Panc1 (cell line): ENCODE measurements at regions of chr7 and their contacts with region 1.

Region 1: GRCh38 chr7:94348142-94348541 is 46.6 kb upstream of the COL1A2 start:
- DNase-seq: no peak
- ATAC-seq: no peak
- H3K4me3 ChIP-seq: no peak overlapping the region
- H3K27ac ChIP-seq: no peak overlapping the region
- H3K4me1 ChIP-seq: no peaks in the 10 kb centered on the region
- H3K27me3 ChIP-seq: no peaks in the 10 kb centered on the region; the same call in 1 of the 2 replicates
- CTCF ChIP-seq: no peak

Region 2: DNA sequence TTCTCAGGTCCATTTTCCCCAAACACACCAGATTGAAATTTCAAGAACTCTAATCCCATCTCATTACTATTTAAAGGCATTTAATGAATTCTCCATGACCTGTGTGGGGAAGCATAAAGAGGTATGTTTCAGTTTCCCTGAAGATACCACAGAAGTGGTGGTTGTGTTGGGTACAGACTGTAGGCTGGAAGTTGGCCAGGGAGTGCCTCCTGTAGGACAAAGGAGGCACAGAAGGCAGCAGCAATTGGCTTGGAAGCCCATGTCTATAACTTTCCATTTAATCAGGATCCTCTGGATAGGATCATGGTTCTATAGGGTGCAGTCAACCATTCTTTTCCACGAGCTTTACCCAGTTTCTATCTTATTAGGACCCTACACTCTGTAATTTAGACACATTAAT is 335.4 kb before region 1 on chr7:
- CTCF ChIA-PET with region 1: no interaction called
- POLR2A ChIA-PET with region 1: no interaction called
- in situ Hi-C with region 1: no loop called
- intact Hi-C with region 1: no loop called
- DNase-seq: no peak
- ATAC-seq: no peak
- H3K4me3 ChIP-seq: no peak overlapping the region
- H3K27ac ChIP-seq: no peak overlapping the region
- H3K4me1 ChIP-seq: no peaks in the 10 kb centered on the region
- H3K27me3 ChIP-seq: no peaks in the 10 kb centered on the region; the same call in 1 of the 2 replicates
- CTCF ChIP-seq: peak; percentile 10; the same call in 1 of the 2 replicates

Region 3: DNA sequence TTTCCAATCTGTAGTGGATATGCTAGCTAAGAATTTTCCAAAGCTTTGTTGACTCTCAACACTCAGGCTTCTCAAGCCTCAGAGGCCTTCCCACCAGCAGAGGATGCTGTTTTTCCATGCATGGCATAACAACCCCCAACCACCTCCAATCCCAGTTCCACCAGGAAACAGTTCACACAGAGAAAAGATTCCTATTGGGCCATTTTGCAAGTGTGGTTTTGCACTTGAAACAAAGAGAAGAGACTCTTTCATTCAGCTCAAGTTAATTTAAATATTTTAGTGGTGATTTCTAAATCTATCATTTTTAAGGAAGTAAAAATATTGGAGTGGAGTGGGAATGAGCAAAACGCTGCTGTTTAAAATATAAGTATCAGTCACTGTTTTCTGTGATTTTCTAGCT is 59.1 kb before region 1 on chr7:
- CTCF ChIA-PET with region 1: no interaction called
- POLR2A ChIA-PET with region 1: no interaction called
- in situ Hi-C with region 1: no loop called
- intact Hi-C with region 1: no loop called
- DNase-seq: peak; percentile 32
- ATAC-seq: peak; percentile 89; the same call in 1 of the 2 replicates
- H3K4me3 ChIP-seq: no peak overlapping the region
- H3K27ac ChIP-seq: no peak overlapping the region
- H3K4me1 ChIP-seq: no peaks in the 10 kb centered on the region
- H3K27me3 ChIP-seq: no peaks in the 10 kb centered on the region; the same call in 1 of the 2 replicates
- CTCF ChIP-seq: peak; percentile 93

Region 4: GRCh38 chr7:94360926-94361325 is 12.8 kb after region 1 on chr7:
- CTCF ChIA-PET with region 1: no interaction called
- POLR2A ChIA-PET with region 1: no interaction called
- in situ Hi-C with region 1: no loop called
- intact Hi-C with region 1: no loop called
- DNase-seq: no peak
- ATAC-seq: no peak
- H3K4me3 ChIP-seq: no peak overlapping the region
- H3K27ac ChIP-seq: no peak overlapping the region
- H3K4me1 ChIP-seq: no peaks in the 10 kb centered on the region
- H3K27me3 ChIP-seq: no peaks in the 10 kb centered on the region
- CTCF ChIP-seq: no peak

Region 5: DNA sequence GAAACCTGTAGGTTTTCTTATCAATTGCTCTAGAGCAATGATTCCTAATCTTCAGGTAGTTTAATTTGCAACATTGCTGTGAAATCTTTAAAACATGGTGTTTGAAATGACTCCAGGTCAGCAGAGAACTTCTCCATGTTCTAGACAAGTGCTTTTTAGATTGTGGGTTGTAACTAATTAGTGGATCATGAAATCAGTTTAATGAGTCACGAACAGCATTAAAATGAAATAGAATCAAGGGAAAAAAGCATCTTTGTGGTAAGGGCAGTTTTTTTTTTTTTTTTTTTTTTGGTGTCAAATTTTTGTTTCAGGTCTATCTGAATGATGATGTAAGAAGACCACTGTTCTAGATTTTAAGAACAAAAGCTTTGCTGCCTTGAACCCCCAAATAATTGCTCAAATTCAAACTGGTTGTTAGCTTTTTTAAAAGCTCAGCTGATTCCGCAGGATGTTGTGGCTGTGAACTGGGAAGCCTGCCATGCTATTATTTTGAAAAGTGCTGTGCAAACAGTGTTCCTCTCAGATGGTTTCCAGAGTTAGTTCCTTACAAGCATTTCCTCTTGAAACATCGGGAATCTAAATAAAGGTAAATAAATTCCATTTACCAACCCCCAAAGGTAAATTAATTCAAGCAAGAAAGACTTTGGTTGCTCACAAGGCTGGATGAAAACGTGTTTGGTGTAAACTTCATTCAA is 1261.3 kb after region 1 on chr7:
- CTCF ChIA-PET with region 1: interaction called, 10 read pairs
- POLR2A ChIA-PET with region 1: no interaction called
- in situ Hi-C with region 1: no loop called
- intact Hi-C with region 1: no loop called
- DNase-seq: peak; percentile 64
- ATAC-seq: peak; percentile 70
- H3K4me3 ChIP-seq: peak overlapping the region in 1 of 2 experiments; percentile 41; a peak in 2 of 4 replicates
- H3K27ac ChIP-seq: peak overlapping the region; percentile 79
- H3K4me1 ChIP-seq: peaks cover 27% of the 10 kb centered on the region
- H3K27me3 ChIP-seq: no peaks in the 10 kb centered on the region
- CTCF ChIP-seq: no peak